BJ (cell line): ENCODE measurements at regions of chr15 and their contacts with region 1.

Region 1: GRCh38 chr15:42207674-42208579 is at the start of gene VPS39:
- DNase-seq: peak; percentile 52
- H3K4me3 ChIP-seq: peak within 1 kb of the TSS; percentile 76
- H3K27me3 ChIP-seq: no peaks in the 10 kb centered on the region
- CTCF ChIP-seq: no peak
- polyA plus RNA-seq, gene VPS39: 54.7 and 79.5 TPM in 2 replicates

Region 2: GRCh38 chr15:42239528-42240182 is 31.7 kb after region 1 on chr15:
- CTCF ChIA-PET with region 1: no interaction called
- POLR2A ChIA-PET with region 1: no interaction called
- DNase-seq: no peak
- H3K4me3 ChIP-seq: no peak overlapping the region
- H3K27me3 ChIP-seq: no peaks in the 10 kb centered on the region
- CTCF ChIP-seq: no peak

Region 3: GRCh38 chr15:43469867-43470266 is 1261.9 kb after region 1 on chr15:
- CTCF ChIA-PET with region 1: no interaction called
- POLR2A ChIA-PET with region 1: interaction called, 10 read pairs
- DNase-seq: no peak
- H3K4me3 ChIP-seq: no peak overlapping the region
- H3K27me3 ChIP-seq: no peaks in the 10 kb centered on the region
- CTCF ChIP-seq: no peak